ENCODE measurements at regions of chr7 and their contacts with region 1.

Region 1: GRCh38 chr7:2519119-2519930 is at the start of gene LFNG:
- DNase-seq: peak in 1 of 2 donors; percentile 91
- H3K4me3 ChIP-seq: peak within 1 kb of the TSS; percentile 72 to 74
- H3K27ac ChIP-seq: no peak within 1 kb of the TSS
- H3K4me1 ChIP-seq: peaks cover 6 to 25% of the 10 kb centered on the region in 2 donors
- H3K27me3 ChIP-seq: peaks cover 15% of the 10 kb centered on the region
- CTCF ChIP-seq: no peak
- total RNA-seq, gene LFNG: 102 TPM

Region 2: DNA sequence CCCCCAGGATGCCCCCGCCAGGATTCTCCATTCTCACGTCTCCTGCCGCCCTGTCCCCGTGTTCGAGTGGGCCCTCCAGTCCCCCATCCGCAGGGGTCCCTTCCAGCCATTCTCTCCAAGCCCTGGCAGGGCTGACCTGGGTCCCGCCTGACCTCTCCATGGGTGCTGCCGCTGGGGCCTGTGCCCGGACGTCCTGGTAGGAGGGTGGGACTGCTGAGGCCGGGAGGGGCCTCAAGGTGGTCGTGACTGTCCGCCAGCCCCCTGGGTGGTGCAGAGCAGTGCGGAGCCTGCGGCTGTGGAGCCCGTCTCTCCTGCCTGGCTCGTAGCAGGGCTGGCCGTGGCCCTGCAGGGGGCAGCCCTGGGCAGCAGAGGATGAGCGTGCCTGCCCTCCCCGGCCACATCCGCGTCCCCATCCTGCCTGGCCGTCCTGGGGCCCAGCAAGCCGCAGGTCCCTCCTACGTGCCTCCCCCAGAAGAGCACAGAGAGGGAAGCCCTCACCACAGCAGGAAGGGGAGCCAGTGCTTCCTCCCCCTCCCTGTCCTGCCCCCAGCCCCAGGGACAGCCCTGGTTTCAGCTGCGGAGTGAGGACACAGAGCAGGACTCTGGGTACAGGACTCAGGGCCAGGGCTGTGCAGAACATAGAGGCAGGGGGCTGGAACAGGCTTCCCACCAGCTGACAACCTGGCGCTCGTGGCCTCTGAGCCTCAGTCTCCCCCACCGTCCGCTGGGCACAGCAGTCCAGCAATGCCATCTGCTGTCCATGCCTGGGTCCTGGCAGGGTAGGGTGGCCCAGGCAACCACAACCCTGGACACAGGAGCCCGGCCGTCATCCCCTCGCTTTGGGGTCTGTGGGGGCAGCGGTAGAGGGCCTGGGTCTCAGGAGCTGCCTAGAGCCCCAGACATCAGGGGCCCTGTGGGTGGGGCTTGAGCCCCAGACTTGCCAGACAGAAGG is 41.6 kb before region 1 on chr7:
- intact Hi-C with region 1: loop called (anchors 2 kb)
- DNase-seq: no peak
- H3K4me3 ChIP-seq: no peak overlapping the region
- H3K27ac ChIP-seq: no peak overlapping the region
- H3K4me1 ChIP-seq: peaks cover 6 to 15% of the 10 kb centered on the region in 2 donors
- H3K27me3 ChIP-seq: peaks cover 6% of the 10 kb centered on the region
- CTCF ChIP-seq: peak; percentile 52 to 63 (median 63)

Region 3: DNA sequence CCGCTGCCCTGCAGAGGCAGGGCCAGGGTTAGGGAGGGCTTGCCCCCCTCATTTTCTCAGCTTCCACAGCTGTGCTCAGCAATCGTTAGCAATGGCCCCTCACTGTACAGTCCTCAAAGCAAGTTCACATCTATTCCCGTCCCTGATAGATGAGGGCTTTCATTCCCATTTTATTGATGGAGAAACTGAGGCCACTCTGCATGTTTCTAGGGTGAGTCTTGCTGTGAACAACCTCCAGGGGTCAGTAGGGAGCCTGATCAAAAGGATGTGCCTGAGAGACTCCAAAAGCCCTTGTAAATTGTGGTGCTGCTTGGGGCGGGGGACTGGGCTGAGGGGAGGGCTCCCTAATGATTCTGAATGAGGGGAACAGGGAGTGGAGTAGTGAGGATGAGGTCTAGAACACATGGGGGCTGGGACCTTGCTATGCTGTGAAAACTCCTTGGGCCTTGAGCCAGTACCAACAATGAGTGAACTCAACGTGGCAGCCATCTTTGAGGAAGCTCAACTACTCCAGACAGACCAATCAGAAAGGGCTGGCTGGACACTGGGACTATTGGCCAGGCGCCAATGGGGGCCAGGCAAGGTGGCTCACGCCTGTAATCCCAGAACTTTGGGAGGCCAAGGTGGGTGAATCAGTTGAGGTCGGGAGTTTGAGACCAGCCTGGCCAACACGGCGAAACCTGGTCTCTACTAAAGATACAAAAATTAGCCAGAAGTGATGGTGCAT is 36.4 kb before region 1 on chr7:
- intact Hi-C with region 1: loop called (anchors 2 kb)
- DNase-seq: no peak
- H3K4me3 ChIP-seq: no peak overlapping the region
- H3K27ac ChIP-seq: no peak overlapping the region
- H3K4me1 ChIP-seq: peaks cover 12 to 20% of the 10 kb centered on the region in 2 donors
- H3K27me3 ChIP-seq: no peaks in the 10 kb centered on the region
- CTCF ChIP-seq: no peak

Measured in ascending aorta (tissue), 2 donors.